Right cardiac atrium (tissue), 5 donors: ENCODE measurements at regions of chr22 and their contacts with region 1.

Region 1: GRCh38 chr22:35627264-35628041 is 10.3 kb upstream of the MB start:
- DNase-seq: peak; percentile 78 to 93 (median 88)
- ATAC-seq: peak; percentile 82 to 86
- H3K4me3 ChIP-seq: peak overlapping the region; percentile 49
- H3K27ac ChIP-seq: peak overlapping the region; percentile 55
- H3K4me1 ChIP-seq: peaks cover 6% of the 10 kb centered on the region
- H3K27me3 ChIP-seq: no peaks in the 10 kb centered on the region

Region 2: DNA sequence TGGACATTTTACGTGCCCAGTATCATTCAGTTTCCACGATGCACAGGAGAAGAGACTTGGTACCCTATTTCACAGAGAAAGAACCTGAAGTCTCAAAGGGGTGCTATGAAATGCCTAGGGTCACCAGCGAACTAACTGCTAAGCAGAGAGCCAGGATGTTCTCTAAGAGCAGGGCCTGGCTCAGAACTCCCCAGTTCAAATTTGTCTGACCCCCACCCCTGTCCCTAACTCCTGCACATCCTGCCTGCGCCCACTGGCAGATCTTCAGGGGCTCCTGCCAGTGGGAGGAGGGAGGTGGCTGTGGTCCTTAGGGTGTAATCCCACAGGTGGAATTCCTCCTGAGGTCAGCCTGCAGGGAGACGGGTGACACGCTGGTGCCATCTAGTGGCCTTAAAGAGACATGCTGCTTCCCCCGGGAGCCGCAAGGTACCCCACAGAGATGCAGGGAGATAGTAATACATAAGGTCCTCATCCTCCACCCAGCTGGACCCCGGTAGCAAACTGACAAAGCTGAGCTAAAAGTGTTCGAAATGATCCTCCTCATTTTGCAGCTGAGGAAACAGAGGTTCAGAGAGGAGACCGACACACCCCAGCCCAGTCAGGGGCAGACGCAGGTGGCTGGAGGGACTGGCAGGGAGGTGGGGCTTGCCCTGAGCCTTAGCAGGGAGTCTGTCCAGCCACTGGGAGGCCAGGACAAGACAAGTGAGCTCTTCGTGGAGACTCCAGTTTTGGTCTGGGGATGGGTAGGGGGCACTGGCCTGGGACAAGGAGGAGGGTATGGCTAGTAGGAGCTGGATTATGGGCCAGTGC is 44.4 kb before region 1 on chr22:
- intact Hi-C with region 1: loop called in 1 of 4 experiments (anchors 2 kb)
- DNase-seq: peak; percentile 45 to 79 (median 77)
- ATAC-seq: peak in 1 of 2 donors; percentile 58
- H3K4me3 ChIP-seq: no peak overlapping the region
- H3K27ac ChIP-seq: no peak overlapping the region
- H3K4me1 ChIP-seq: peaks cover 3% of the 10 kb centered on the region
- H3K27me3 ChIP-seq: no peaks in the 10 kb centered on the region

Region 3: DNA sequence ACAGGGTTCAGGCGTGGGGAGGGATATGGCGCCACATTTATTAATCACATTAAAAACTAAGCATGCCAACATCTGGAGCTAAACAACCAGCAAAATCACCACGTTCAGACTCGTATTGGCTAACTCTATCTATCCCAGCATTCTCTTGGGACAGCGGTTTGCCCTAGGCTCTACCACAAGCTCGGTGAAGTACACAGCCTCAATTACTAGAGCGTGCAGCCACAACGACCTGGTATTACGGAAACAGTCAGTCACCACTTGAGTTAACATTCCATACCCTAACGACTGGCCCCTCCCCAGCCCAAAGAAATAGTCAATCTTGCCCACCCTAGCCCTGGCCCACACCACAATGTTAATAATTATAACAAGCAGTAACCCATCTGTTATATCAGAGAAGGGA is 122.4 kb after region 1 on chr22:
- intact Hi-C with region 1: loop called in 1 of 4 experiments (anchors 10 kb)
- DNase-seq: no peak
- ATAC-seq: no peak
- H3K4me3 ChIP-seq: no peak overlapping the region
- H3K27ac ChIP-seq: no peak overlapping the region
- H3K4me1 ChIP-seq: peaks cover 4% of the 10 kb centered on the region
- H3K27me3 ChIP-seq: no peaks in the 10 kb centered on the region

Region 4: GRCh38 chr22:35921777-35922176 is 294.3 kb after region 1 on chr22:
- intact Hi-C with region 1: loop called in 3 of 4 experiments (anchors 5 to 10 kb)
- DNase-seq: peak in 1 of 3 donors; percentile 51
- ATAC-seq: peak; percentile 89 to 95
- H3K4me3 ChIP-seq: no peak overlapping the region
- H3K27ac ChIP-seq: no peak overlapping the region
- H3K4me1 ChIP-seq: peaks cover 5% of the 10 kb centered on the region
- H3K27me3 ChIP-seq: no peaks in the 10 kb centered on the region